ENCODE measurements at regions of chr10 and their contacts with region 1.

Region 1: GRCh38 chr10:93916257-93917063 is 22.7 kb downstream of the SLC35G1 start:
- DNase-seq: peak; percentile 26 to 58
- ATAC-seq: peak; percentile 84 to 91; a peak in 5 of 6 replicates
- H3K4me3 ChIP-seq: no peak overlapping the region
- H3K27ac ChIP-seq: peak overlapping the region; percentile 21 to 62; a peak in 4 of 6 replicates
- H3K4me1 ChIP-seq: peaks cover 19% of the 10 kb centered on the region; the same call in 2 of the 3 replicates
- CTCF ChIP-seq: peak; percentile 87
- EP300 ChIP-seq: no peak
- POLR2A ChIP-seq: no peak
- RAD21 ChIP-seq: peak; percentile 86 to 91

Region 2: GRCh38 chr10:93667795-93668194 is 248.7 kb before region 1 on chr10:
- CTCF ChIA-PET with region 1: no interaction called
- POLR2A ChIA-PET with region 1: no interaction called
- DNase-seq: no peak
- ATAC-seq: no peak
- H3K4me3 ChIP-seq: no peak overlapping the region
- H3K27ac ChIP-seq: no peak overlapping the region
- H3K4me1 ChIP-seq: no peaks in the 10 kb centered on the region
- CTCF ChIP-seq: no peak
- EP300 ChIP-seq: no peak
- POLR2A ChIP-seq: no peak
- RAD21 ChIP-seq: no peak

Region 3: GRCh38 chr10:93757801-93758507 is 158.5 kb before region 1 on chr10 and contains the start of gene LGI1:
- CTCF ChIA-PET with region 1: no interaction called
- POLR2A ChIA-PET with region 1: no interaction called
- DNase-seq: no peak
- ATAC-seq: no peak
- H3K4me3 ChIP-seq: no peak within 1 kb of the TSS
- H3K27ac ChIP-seq: no peak within 1 kb of the TSS
- H3K4me1 ChIP-seq: no peaks in the 10 kb centered on the region
- CTCF ChIP-seq: no peak
- EP300 ChIP-seq: no peak
- POLR2A ChIP-seq: no peak
- RAD21 ChIP-seq: no peak
- polyA plus RNA-seq, gene LGI1: not detected in 2 replicates

Region 4: GRCh38 chr10:93926613-93927012 is 10.2 kb after region 1 on chr10:
- CTCF ChIA-PET with region 1: interaction called, 12 read pairs
- POLR2A ChIA-PET with region 1: no interaction called
- DNase-seq: no peak
- ATAC-seq: no peak
- H3K4me3 ChIP-seq: no peak overlapping the region
- H3K27ac ChIP-seq: no peak overlapping the region
- H3K4me1 ChIP-seq: no peaks in the 10 kb centered on the region
- CTCF ChIP-seq: no peak
- EP300 ChIP-seq: no peak
- POLR2A ChIP-seq: no peak
- RAD21 ChIP-seq: no peak

Region 5: GRCh38 chr10:93993782-93994437 is 77.5 kb after region 1 on chr10 and contains the start of gene PLCE1:
- CTCF ChIA-PET with region 1: interaction called, 11 read pairs
- POLR2A ChIA-PET with region 1: no interaction called
- DNase-seq: peak; percentile 46 to 71
- ATAC-seq: peak; percentile 76 to 83
- H3K4me3 ChIP-seq: peak within 1 kb of the TSS; percentile 63
- H3K27ac ChIP-seq: peak within 1 kb of the TSS; percentile 91 to 93
- H3K4me1 ChIP-seq: peaks cover 46% of the 10 kb centered on the region
- CTCF ChIP-seq: peak; percentile 23
- EP300 ChIP-seq: no peak
- POLR2A ChIP-seq: peak; percentile 70
- RAD21 ChIP-seq: peak in 1 of 2 experiments; percentile 22; a peak in 2 of 5 replicates
- polyA plus RNA-seq, gene PLCE1: 18.2 and 20.7 TPM in 2 replicates

Region 6: GRCh38 chr10:94076321-94076841 is 159.9 kb after region 1 on chr10:
- CTCF ChIA-PET with region 1: interaction called, 11 read pairs
- POLR2A ChIA-PET with region 1: interaction called, 3 read pairs
- DNase-seq: peak; percentile 36 to 37
- ATAC-seq: peak; percentile 93 to 95
- H3K4me3 ChIP-seq: no peak overlapping the region
- H3K27ac ChIP-seq: peak overlapping the region in 1 of 2 experiments; percentile 62; a peak in 4 of 6 replicates
- H3K4me1 ChIP-seq: peaks cover 30% of the 10 kb centered on the region
- CTCF ChIP-seq: peak; percentile 52
- EP300 ChIP-seq: no peak
- POLR2A ChIP-seq: no peak
- RAD21 ChIP-seq: peak; percentile 70 to 77

Region 7: GRCh38 chr10:94320285-94320914 is 403.9 kb after region 1 on chr10:
- CTCF ChIA-PET with region 1: interaction called, 106 read pairs
- POLR2A ChIA-PET with region 1: interaction called, 4 read pairs
- DNase-seq: peak; percentile 33 to 61
- ATAC-seq: peak; percentile 63 to 77; a peak in 5 of 6 replicates
- H3K4me3 ChIP-seq: no peak overlapping the region
- H3K27ac ChIP-seq: no peak overlapping the region
- H3K4me1 ChIP-seq: no peaks in the 10 kb centered on the region
- CTCF ChIP-seq: peak; percentile 96
- EP300 ChIP-seq: no peak
- POLR2A ChIP-seq: no peak
- RAD21 ChIP-seq: peak; percentile 81 to 82

Region 8: DNA sequence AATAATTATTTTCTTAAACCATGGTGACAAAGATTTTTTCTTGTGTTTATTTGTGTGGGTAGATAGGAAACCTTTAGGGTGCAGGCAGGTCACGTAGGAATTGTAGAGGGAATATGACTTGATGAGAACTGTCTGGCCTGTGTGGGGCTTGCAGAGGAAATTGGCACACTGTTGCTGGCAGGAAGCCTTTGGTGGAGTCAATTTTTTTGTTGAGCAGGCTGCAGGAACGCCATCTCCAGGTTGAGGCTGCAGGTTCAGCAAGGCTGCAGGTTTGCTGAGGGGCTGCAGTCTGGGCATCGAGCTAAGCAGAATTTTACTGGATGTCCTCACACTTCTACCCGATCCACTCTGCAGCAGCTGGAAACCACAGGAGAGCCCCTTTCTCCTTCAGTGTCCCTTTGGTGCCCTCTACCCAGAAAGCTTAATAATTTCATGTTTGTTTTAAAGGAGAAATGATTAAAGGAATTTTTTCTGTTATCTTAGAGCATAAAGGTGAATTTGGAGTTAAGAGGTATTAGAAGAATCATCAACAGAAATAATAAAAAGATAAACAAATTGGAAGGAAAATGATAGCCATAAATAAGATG is 522.9 kb after region 1 on chr10:
- CTCF ChIA-PET with region 1: interaction called, 37 read pairs
- POLR2A ChIA-PET with region 1: no interaction called
- DNase-seq: peak in 1 of 2 experiments; percentile 14
- ATAC-seq: peak; percentile 30 to 60; a peak in 4 of 6 replicates
- H3K4me3 ChIP-seq: no peak overlapping the region
- H3K27ac ChIP-seq: no peak overlapping the region
- H3K4me1 ChIP-seq: no peaks in the 10 kb centered on the region
- CTCF ChIP-seq: no peak
- EP300 ChIP-seq: no peak
- POLR2A ChIP-seq: no peak
- RAD21 ChIP-seq: peak in 1 of 2 experiments; percentile 29; a peak in 1 of 5 replicates